Heart left ventricle (tissue), 16 donors: ENCODE measurements at regions of chr2 and their contacts with region 1.

Region 1: DNA sequence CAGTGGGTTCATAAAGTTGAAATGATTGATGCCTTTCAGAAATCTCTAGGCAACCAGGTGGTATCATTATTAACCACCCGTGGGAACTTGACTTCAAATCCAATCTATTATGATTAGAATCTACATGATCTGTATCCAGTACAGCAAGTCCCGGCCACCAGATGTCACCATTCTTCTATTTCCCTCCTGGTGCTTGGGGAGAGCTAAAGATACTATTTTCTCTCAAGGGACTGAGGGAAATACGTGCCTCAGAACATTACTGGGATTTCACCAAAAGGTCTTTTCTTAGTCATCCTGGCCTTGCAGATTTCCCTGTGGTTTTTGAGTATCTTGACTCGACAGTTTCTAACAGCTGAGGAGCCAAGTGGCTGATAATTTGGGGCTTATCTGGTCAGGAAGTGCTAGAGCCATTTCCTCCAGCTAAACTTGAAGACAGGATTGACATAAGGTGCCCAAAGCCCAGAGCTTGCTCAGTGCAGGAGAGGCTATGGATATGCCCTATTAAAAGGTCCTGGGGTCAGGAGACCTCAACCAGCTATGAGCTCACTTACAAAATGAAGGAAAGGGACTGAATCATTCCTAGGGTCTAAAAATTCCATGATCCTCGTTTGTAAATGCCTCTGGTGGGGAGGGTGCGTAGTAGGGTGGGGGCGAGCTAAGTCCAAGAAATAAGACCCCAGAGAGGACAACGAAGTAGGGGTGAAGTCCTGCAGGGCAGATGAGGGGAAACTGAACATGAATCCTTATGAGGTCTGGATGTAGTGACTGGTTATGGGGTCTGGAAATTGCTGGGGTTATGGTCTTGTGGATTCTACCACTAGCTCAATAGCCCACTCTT is 135.4 kb upstream of the MGAT5 start:
- DNase-seq: peak; percentile 84 to 91 (median 86)
- ATAC-seq: peak; percentile 42 to 72 (median 53)
- H3K4me3 ChIP-seq: peak overlapping the region in 3 of 12 donors; percentile 5 to 99 (median 73)
- H3K27ac ChIP-seq: peak overlapping the region; percentile 33 to 96 (median 94)
- H3K4me1 ChIP-seq: peaks cover 10 to 43% (median 34%) of the 10 kb centered on the region in 12 donors
- H3K27me3 ChIP-seq: no peaks in the 10 kb centered on the region
- CTCF ChIP-seq: peak; percentile 67 to 94 (median 84)
- POLR2A ChIP-seq: no peak

Region 2: GRCh38 chr2:134178241-134178877 is 59.9 kb after region 1 on chr2:
- intact Hi-C with region 1: loop called in 4 of 10 experiments (anchors 5 to 10 kb)
- DNase-seq: no peak
- ATAC-seq: no peak
- H3K4me3 ChIP-seq: no peak overlapping the region
- H3K27ac ChIP-seq: peak overlapping the region in 2 of 12 donors; percentile 3 to 6
- H3K4me1 ChIP-seq: peaks cover 0 to 87% (median 62%) of the 10 kb centered on the region in 12 donors
- H3K27me3 ChIP-seq: no peaks in the 10 kb centered on the region
- CTCF ChIP-seq: no peak
- POLR2A ChIP-seq: no peak

Region 3: DNA sequence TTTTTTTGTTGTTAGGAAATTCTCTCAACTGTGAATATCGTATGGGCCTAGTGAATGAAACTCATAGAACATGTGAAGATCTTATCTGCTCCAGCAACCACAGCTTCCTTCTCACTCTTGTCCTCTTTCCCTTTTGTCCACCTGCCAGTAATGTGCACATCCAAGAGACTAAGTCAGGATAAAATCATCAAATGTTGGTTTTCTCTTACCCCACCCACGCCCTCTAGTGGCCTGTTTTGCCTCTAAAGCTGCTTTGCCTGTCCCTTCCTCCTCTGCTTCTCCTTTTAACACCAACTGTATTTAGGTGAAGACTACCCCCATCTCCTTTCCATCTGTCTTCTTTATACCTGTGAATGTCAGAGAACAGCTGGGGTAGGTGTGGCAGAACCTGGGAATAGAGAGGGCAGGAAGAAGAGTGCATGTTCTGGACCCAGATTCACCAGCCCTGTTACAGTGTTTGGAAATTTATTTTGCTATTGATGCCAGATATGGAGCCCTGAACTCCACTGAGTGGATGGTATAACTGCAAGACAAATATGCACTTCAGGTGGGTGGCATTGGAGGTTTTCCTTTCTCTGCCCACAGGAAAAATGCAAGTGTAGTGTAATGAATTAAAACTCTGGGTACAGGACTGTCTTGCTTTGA is 127.0 kb after region 1 on chr2:
- intact Hi-C with region 1: loop called in 8 of 10 experiments (anchors 2 to 10 kb)
- DNase-seq: peak; percentile 76 to 86 (median 78)
- ATAC-seq: peak; percentile 41 to 71 (median 64)
- H3K4me3 ChIP-seq: no peak overlapping the region
- H3K27ac ChIP-seq: peak overlapping the region in 2 of 12 donors; percentile 50 to 52
- H3K4me1 ChIP-seq: peaks cover 3 to 80% (median 53%) of the 10 kb centered on the region in 12 donors
- H3K27me3 ChIP-seq: no peaks in the 10 kb centered on the region
- CTCF ChIP-seq: peak; percentile 62 to 84 (median 76)
- POLR2A ChIP-seq: no peak

Region 4: GRCh38 chr2:134268265-134268664 is 149.8 kb after region 1 on chr2:
- intact Hi-C with region 1: loop called in 2 of 10 experiments (anchors 5 kb)
- DNase-seq: peak in 4 of 5 donors; percentile 39 to 84 (median 56)
- ATAC-seq: peak; percentile 56 to 85 (median 82)
- H3K4me3 ChIP-seq: no peak overlapping the region
- H3K27ac ChIP-seq: peak overlapping the region in 5 of 12 donors; percentile 10 to 69 (median 41)
- H3K4me1 ChIP-seq: peaks cover 0 to 65% (median 25%) of the 10 kb centered on the region in 12 donors
- H3K27me3 ChIP-seq: no peaks in the 10 kb centered on the region
- CTCF ChIP-seq: peak in 7 of 12 donors; percentile 20 to 44 (median 27)
- POLR2A ChIP-seq: no peak

Region 5: DNA sequence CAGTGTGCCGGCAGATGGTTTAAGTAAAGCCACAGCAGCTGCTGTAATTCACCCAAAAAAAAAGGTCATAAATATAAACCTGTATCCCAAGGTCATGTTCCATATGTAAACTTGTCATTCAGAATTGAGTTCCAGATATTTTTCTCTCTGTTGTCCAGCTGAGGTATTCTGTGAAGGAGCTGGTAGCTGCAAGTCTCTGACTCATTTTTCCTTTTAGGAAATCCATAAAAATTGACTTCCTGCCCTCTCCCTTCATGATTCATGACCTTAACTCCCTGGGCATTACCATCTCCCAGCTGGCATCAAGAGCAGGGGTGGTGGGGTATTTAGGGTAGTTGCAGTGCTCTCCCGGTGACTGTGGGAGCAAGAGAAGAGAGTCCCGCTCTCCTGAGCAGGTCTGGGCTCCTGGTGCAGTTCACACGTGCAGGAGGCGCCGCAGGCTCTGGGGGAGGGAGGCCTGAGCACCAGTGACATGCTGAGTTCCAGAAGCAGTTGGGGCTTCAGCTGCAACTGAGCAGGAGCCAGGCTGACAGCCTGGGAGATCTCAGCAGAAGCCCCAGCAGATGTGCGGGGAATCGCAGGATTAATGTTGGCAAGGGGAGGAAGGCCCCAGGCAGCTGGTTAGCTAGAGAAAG is 328.0 kb after region 1 on chr2:
- intact Hi-C with region 1: loop called in 4 of 10 experiments (anchors 1 to 5 kb)
- DNase-seq: no peak
- ATAC-seq: no peak
- H3K4me3 ChIP-seq: no peak overlapping the region
- H3K27ac ChIP-seq: peak overlapping the region in 1 of 12 donors; percentile 9
- H3K4me1 ChIP-seq: peaks cover 0 to 23% (median 7%) of the 10 kb centered on the region in 12 donors
- H3K27me3 ChIP-seq: no peaks in the 10 kb centered on the region
- CTCF ChIP-seq: no peak
- POLR2A ChIP-seq: no peak